Activated CD4-positive, alpha-beta memory T cell treated with anti-CD3 and anti-CD28 coated beads, Interleukin-2, amount 10 ng/mL, durations not matched to agents 7 days and 5 days (primary cell): ENCODE measurements at regions of chr3 and their contacts with region 1.

Region 1: GRCh38 chr3:53347261-53348064 is at the start of gene DCP1A:
- DNase-seq: peak; percentile 97
- H3K4me3 Mint-ChIP-seq: peak within 1 kb of the TSS; percentile 98
- H3K27ac Mint-ChIP-seq: peak within 1 kb of the TSS; percentile 89
- H3K4me1 Mint-ChIP-seq: peaks cover 32% of the 10 kb centered on the region
- H3K27me3 Mint-ChIP-seq: no peaks in the 10 kb centered on the region
- total RNA-seq, gene DCP1A: 33.0 to 34.7 TPM

Region 2: GRCh38 chr3:53337167-53337940 is 10.1 kb before region 1 on chr3:
- CTCF ChIA-PET with region 1: interaction called, 3 read pairs
- POLR2A ChIA-PET with region 1: interaction called, 10 read pairs
- DNase-seq: no peak
- H3K4me3 Mint-ChIP-seq: no peak overlapping the region
- H3K27ac Mint-ChIP-seq: no peak overlapping the region
- H3K4me1 Mint-ChIP-seq: peaks cover 3% of the 10 kb centered on the region
- H3K27me3 Mint-ChIP-seq: no peaks in the 10 kb centered on the region